ENCODE measurements at regions of chr20 and their contacts with region 1.

Region 1: GRCh38 chr20:63739130-63740069 is at the start of gene SLC2A4RG:
- DNase-seq: peak; percentile 74
- H3K4me3 Mint-ChIP-seq: peak within 1 kb of the TSS; percentile 64
- H3K27ac Mint-ChIP-seq: no peak within 1 kb of the TSS
- H3K4me1 Mint-ChIP-seq: peaks cover 19% of the 10 kb centered on the region
- H3K27me3 Mint-ChIP-seq: no peaks in the 10 kb centered on the region
- total RNA-seq, gene SLC2A4RG: 58.9 to 59.0 TPM

Region 2: DNA sequence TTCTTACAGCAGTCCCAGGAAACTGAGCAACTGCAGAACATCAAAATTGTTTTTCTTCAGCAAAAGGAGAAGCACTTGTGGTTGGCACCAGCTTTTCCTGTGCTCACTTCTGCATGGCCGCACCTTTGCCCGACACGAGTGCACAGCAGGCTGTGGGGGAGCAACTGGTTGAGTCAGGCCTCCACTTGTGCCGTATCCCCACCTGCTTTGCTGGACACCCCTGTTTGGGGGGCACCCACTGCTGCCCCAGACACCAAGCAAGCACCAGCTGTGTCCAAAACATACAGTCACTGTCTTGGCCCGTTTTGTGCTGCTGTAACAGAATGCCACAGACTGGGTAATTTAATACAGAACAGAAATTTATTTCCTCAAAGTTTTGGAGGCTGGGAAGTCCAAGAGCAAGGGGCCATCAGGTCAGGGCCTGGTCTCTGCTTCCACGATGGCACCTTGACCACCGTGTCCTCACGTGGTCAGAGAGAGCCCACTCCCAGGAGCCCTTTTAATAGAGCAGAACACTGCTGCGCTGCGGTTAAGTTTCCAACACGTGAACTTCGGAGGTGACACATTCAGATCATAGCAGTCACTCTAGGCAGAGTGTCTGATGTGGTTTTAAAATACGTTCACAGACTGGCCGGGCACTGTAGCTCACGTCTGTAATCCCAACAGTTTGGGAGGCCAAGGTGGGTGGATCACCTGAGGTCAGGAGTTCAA is 103.8 kb before region 1 on chr20:
- CTCF ChIA-PET with region 1: no interaction called
- POLR2A ChIA-PET with region 1: no interaction called
- intact Hi-C with region 1: loop called (anchors 5 kb)
- DNase-seq: peak; percentile 90
- H3K4me3 Mint-ChIP-seq: peak overlapping the region; percentile 60
- H3K27ac Mint-ChIP-seq: peak overlapping the region; percentile 93
- H3K4me1 Mint-ChIP-seq: peaks cover 55% of the 10 kb centered on the region
- H3K27me3 Mint-ChIP-seq: no peaks in the 10 kb centered on the region

Region 3: DNA sequence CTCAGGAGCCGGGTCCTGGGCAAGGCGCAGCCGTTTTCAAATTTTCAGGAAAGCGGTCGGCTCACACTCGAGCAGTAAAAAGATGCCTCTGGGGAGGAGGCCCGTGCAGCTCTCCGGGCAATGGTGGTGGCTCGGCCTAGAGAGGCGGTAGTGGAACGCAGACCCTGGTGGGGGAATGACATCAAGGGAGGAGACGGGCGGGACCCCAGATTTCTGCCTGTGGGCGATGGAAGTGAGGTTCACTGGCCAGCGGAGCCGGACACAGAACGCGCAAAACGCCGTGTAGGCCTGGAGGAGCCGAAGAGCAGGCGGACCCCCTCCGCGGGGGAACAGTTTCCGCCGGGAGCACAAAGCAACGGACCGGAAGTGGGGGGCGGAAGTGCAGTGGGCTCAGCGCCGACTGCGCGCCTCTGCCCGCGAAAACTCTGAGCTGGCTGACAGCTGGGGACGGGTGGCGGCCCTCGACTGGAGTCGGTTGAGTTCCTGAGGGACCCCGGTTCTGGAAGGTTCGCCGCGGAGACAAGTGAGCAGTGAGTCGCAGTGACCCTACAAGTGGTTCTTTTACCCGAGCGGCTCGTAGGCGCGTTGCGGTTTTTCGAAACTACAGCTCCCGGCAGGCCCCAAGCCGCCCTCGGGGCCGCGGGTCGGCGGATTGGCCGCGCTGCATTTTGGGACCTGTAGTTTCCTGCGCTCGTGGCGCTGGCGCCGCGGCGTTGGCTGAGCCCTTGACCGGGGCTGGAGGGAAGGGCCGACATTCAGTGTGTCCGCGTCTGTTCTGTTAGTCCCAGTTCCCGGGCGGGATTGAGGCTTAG is 81.3 kb before region 1 on chr20 and contains the start of gene RTEL1:
- CTCF ChIA-PET with region 1: interaction called, 3 read pairs
- POLR2A ChIA-PET with region 1: no interaction called
- intact Hi-C with region 1: loop called (anchors 5 kb)
- DNase-seq: peak; percentile 92
- H3K4me3 Mint-ChIP-seq: peak within 1 kb of the TSS; percentile 92
- H3K27ac Mint-ChIP-seq: peak within 1 kb of the TSS; percentile 93
- H3K4me1 Mint-ChIP-seq: peaks cover 29% of the 10 kb centered on the region
- H3K27me3 Mint-ChIP-seq: no peaks in the 10 kb centered on the region
- total RNA-seq, gene RTEL1: 38.0 to 38.3 TPM

Region 4: GRCh38 chr20:63686492-63687321 is 52.7 kb before region 1 on chr20:
- CTCF ChIA-PET with region 1: no interaction called
- POLR2A ChIA-PET with region 1: no interaction called
- intact Hi-C with region 1: no loop called
- DNase-seq: peak; percentile 81
- H3K4me3 Mint-ChIP-seq: no peak overlapping the region
- H3K27ac Mint-ChIP-seq: peak overlapping the region; percentile 69
- H3K4me1 Mint-ChIP-seq: peaks cover 15% of the 10 kb centered on the region
- H3K27me3 Mint-ChIP-seq: no peaks in the 10 kb centered on the region

Region 5: DNA sequence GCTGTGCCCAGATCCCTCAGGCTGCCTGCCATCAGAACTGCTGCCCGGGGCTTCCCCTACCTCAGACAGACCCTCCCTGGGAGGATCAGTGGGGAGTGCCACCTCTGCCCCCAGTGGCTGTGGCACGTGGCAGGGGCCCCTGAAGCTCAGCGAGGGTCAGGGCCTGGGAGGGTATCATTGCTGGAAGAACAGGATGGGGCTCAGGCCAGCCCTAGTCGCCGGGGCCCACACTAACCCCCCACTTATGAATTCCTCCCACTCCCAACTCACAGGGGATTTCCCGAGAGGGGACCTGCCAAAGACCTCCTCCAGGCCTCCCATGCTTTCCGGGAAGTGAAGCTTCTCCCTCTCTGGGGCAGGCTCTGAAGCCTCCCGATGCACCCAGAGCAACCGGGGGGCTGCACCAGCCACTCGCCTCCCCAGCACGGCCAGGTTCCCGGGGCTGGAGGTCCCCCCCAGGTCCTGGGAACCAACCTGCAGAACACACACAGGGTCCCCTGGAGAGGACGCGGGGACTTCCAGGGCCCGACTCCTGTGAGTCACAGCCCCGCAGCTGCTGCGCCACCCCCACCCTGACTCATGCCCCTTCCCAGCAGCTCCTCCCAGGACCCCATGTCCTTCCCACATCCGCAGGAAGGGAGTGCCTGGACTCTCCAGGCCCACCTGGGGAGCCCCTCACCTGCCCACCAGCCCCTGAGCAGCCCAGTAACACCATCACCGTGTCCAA is 40.5 kb before region 1 on chr20:
- CTCF ChIA-PET with region 1: no interaction called
- POLR2A ChIA-PET with region 1: interaction called, 10 read pairs
- intact Hi-C with region 1: no loop called
- DNase-seq: peak; percentile 88
- H3K4me3 Mint-ChIP-seq: peak overlapping the region; percentile 39
- H3K27ac Mint-ChIP-seq: peak overlapping the region; percentile 92
- H3K4me1 Mint-ChIP-seq: peaks cover 41% of the 10 kb centered on the region
- H3K27me3 Mint-ChIP-seq: no peaks in the 10 kb centered on the region

Region 6: GRCh38 chr20:63707549-63708300 is 31.7 kb before region 1 on chr20 and contains the starts of genes ARFRP1 and ZGPAT:
- CTCF ChIA-PET with region 1: interaction called, 26 read pairs
- POLR2A ChIA-PET with region 1: interaction called, 30 read pairs
- intact Hi-C with region 1: loop called (anchors 1 kb)
- DNase-seq: peak; percentile 93
- H3K4me3 Mint-ChIP-seq: peak within 1 kb of the TSS; percentile 93
- H3K27ac Mint-ChIP-seq: peak within 1 kb of the TSS; percentile 94
- H3K4me1 Mint-ChIP-seq: peaks cover 44% of the 10 kb centered on the region
- H3K27me3 Mint-ChIP-seq: no peaks in the 10 kb centered on the region
- total RNA-seq, gene ARFRP1: 54.6 to 58.4 TPM
- total RNA-seq, gene ZGPAT: 28.7 to 29.9 TPM

Region 7: GRCh38 chr20:63973636-63974402 is 234.4 kb after region 1 on chr20:
- CTCF ChIA-PET with region 1: no interaction called
- POLR2A ChIA-PET with region 1: no interaction called
- intact Hi-C with region 1: loop called (anchors 10 kb)
- DNase-seq: peak; percentile 83
- H3K4me3 Mint-ChIP-seq: no peak overlapping the region
- H3K27ac Mint-ChIP-seq: peak overlapping the region; percentile 31
- H3K4me1 Mint-ChIP-seq: peaks cover 37% of the 10 kb centered on the region
- H3K27me3 Mint-ChIP-seq: no peaks in the 10 kb centered on the region

Measured in activated CD4-positive, alpha-beta memory T cell treated with anti-CD3 and anti-CD28 coated beads for 36 hours (primary cell).